AG04449 (cell line): ENCODE measurements at regions of chr12 and their contacts with region 1.

Region 1: DNA sequence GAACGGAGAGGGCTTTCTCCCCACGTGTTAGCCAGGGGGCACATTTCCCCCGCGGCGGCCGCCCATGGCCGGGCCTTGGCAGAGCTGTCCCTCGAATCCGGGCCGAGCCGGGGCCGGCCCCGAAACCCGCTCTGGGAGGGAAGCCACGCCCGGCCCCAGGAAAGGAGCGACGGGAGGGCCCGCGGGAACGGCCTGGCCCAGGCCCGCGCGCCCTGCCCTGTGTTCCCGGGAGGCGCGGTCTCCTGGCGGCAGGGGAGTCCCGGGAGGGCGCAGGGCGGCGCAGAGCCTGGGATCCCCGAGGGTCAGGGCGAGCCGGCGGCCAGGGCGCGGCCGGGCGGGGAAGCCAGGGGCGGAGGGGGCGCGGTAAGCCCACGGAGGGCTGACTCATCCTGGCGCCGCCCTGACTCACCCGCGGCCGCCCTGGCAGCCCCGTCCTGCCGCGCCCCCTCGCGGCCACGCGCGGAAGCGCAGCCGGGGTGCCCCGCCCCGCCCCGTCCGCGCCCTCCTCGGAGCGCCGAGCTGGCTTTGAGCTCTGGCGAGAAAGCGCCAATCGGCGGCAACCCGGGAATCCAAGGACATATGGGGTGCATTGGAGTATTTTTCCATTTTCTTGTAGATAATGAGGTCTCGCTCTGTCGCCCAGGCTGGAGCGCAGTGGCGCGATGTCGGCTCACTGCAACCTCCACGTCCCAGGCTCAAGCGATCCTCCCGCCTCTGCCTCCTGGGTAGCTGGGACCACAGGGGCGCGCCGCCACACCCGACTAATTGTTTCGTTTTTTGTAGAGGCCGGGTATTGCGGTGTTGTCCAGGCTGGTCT is 31.8 kb upstream of the PLEKHG6 start:
- DNase-seq: no peak
- H3K4me3 ChIP-seq: peak overlapping the region; percentile 60
- CTCF ChIP-seq: peak; percentile 64

Region 2: GRCh38 chr12:6056406-6057240 is 222.0 kb before region 1 on chr12:
- CTCF ChIA-PET with region 1: interaction called, 178 read pairs
- POLR2A ChIA-PET with region 1: interaction called, 3 read pairs
- DNase-seq: no peak
- H3K4me3 ChIP-seq: no peak overlapping the region
- CTCF ChIP-seq: peak; percentile 35

Region 3: DNA sequence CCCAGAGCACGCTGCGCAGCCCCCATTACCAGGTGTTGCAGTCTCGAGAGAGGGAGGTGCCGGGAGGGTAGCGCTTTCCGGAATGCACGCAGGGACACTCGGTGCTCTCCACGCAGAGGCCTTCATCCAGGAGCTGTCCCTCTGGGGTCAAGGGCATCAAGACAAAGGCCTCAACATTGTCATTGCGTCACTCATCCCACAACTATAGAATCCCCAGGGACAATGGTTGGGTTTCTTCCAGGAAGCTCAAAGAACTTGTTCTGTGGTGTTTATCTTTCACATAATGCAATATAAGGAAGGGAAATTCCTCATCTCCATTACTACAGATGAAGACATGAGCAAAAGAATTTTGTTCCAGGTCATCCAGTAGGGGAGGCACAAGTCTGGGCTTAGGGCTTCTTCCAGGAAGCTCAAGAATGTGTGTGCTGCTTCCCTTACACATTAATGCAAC is 206.3 kb before region 1 on chr12:
- CTCF ChIA-PET with region 1: interaction called, 178 read pairs
- POLR2A ChIA-PET with region 1: no interaction called
- DNase-seq: peak; percentile 69
- H3K4me3 ChIP-seq: no peak overlapping the region
- CTCF ChIP-seq: peak; percentile 28

Region 4: DNA sequence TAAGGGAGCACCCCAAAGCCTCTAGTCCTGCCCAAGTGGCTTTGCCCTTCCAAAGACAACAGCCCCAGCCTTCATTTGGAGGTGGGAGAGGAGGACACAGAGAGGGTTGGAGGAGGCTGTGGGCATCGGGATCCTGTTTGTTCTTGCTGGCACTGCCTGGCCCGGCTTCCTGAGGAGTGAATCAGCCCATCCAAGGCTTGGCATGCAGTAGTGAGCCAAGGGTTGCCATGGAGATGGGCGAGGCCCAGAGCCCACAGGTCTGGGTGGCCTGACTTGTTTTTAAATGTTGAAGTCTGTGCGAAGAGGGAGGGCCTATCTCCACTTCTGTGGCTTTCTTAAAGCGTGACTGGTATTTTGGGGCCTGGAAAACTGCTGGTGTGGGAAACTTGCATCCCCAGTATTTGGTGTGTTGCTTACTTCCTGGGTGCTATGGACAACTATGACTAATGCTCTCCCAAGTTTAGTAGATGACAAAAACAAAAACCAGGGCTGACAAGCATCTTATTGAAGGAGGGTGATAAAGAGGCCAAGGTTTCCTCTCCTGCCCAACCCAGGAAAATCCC is 62.6 kb before region 1 on chr12:
- CTCF ChIA-PET with region 1: interaction called, 56 read pairs
- POLR2A ChIA-PET with region 1: no interaction called
- DNase-seq: peak; percentile 75
- H3K4me3 ChIP-seq: no peak overlapping the region
- CTCF ChIP-seq: no peak

Region 5: DNA sequence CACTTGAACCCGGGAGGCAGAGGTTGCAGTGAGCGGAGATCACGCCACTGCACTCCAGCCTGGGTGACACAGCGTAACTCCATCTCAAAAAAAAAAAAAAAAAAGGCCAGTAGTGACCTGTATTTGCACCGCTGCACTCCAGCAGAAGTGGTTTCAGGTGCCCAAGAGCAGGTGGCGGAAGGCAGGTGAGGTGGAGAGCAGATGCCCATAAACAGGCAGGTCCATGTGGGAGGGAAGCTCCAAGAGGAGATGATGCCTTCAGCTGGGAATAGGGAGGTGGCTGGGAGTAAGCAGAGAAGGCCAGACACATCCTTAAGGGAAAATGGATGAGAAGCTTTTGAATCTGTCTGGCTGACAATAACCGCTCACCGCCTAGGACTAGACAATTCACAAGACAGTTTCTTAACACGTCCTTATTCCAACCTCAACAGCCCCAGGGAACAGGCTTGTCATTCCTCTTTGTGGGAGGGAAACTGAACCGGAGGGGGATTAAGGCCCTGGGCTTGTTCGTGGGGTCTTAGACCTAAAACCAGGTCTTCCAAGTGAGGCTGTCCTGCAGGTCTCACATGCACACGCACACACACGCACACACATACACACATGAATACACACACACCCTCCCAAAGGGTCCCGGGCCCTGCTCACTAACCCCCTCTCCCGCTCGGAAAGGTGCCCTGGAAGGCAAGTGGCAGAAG is 12.1 kb before region 1 on chr12:
- CTCF ChIA-PET with region 1: interaction called, 17 read pairs
- POLR2A ChIA-PET with region 1: no interaction called
- DNase-seq: no peak
- H3K4me3 ChIP-seq: no peak overlapping the region
- CTCF ChIP-seq: no peak